CD8-positive, alpha-beta T cell (primary cell): ENCODE measurements at regions of chr6 and their contacts with region 1.

Region 1: DNA sequence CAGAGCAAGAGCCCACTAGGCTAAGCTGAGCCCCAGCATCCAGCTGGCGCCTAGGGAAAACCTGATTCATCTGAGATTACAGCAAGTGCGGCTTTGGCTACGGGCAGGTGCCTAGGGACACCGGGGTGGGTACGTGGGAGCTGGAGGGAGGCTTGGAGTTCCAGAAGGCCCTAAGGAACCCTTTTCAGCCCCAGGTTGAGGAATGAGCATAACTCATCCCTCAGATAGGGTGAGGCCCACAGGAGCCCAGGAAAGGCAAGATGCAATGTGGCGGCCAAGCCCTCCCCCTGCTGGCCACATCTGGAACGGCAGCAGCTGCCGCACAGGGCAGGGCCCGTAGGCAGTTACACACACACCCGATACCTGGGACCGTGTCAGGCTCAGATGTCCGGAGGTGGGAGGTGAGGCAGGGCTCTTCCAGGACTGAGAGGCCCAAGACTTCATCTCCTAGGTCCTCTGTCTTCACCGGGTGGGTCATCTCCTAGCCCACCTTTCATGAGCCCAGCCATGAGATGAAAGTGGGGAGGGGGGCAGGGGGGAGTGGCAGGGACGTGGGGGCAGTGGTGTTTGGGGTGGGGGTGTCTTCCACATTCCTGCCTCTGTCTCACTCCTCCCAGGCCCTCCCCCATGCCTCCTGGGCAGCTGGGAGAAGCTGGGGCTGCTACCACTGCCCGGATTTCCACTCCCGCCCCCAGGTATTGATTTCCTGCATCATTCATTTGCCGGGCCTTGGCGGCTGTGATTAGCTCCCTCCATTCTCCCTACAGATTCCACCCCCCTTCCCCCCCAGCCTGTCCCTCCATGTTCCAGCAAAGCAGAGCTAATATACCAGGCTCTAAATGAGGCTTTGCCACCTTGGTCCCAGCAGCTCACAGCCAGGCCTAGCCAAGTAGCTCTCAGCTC is 5.5 kb downstream of the MDGA1 start:
- DNase-seq: peak; percentile 64 to 90 (median 81)
- ATAC-seq: peak; percentile 83
- H3K4me3 ChIP-seq: no peak overlapping the region
- H3K4me3 Mint-ChIP-seq: no peak overlapping the region
- H3K27ac ChIP-seq: no peak overlapping the region
- H3K27ac Mint-ChIP-seq: no peak overlapping the region
- H3K4me1 ChIP-seq: peaks cover 16% of the 10 kb centered on the region
- H3K4me1 Mint-ChIP-seq: peaks cover 10% of the 10 kb centered on the region
- H3K27me3 ChIP-seq: peaks cover 6 to 25% of the 10 kb centered on the region in 2 experiments
- H3K27me3 Mint-ChIP-seq: peaks cover 21% of the 10 kb centered on the region
- CTCF ChIP-seq: peak; percentile 92

Region 2: DNA sequence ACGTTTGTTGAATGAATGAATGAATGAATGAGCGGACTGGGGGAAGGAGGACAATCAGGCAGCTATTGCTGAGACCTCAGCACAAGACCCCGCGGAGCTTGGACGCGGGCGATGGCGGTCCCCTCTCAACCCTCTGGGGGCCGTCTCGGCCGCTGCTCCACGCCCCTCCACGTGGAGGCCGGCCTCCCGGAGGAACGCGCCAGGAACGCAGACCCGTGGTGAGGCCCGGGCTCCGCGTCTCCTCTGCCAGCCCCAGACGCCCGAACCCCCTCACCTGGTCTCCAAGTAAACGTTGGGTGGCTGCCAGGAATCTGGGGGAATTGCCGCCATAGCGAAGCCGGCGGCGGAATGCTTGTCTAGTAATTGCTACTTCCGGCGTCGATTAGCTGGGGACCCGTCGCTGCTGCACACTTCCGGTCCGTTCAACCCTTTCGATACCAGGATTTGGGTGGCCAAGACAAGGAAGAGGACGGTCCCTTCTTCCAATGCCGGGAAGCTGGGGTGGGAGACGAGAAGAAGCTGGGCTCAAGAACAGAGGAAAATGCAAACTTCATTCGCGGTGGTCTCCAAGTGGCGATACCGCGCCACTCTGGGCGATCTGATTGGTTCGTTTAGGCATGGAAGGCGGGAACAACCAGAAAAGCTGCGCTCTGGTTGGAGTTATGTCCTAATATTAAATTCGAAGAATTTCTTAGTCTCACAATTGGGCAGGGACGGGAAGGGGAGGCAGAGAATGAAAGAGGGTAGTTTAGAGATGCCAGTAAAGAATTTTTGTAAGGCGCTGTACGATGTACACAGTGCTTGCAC is 817.5 kb before region 1 on chr6 and contains the start of gene PPIL1:
- CTCF ChIA-PET with region 1: no interaction called
- POLR2A ChIA-PET with region 1: no interaction called
- intact Hi-C with region 1: loop called in 1 of 2 experiments (anchors 10 kb)
- DNase-seq: peak; percentile 72 to 92 (median 85)
- ATAC-seq: peak; percentile 90
- H3K4me3 ChIP-seq: peak within 1 kb of the TSS; percentile 88 to 92
- H3K4me3 Mint-ChIP-seq: peak within 1 kb of the TSS; percentile 100
- H3K27ac ChIP-seq: peak within 1 kb of the TSS; percentile 82 to 87
- H3K27ac Mint-ChIP-seq: peak within 1 kb of the TSS; percentile 100
- H3K4me1 ChIP-seq: peaks cover 16% of the 10 kb centered on the region
- H3K4me1 Mint-ChIP-seq: peaks cover 48% of the 10 kb centered on the region
- H3K27me3 ChIP-seq: peaks cover 0 to 6% of the 10 kb centered on the region in 2 experiments
- H3K27me3 Mint-ChIP-seq: peaks cover 16% of the 10 kb centered on the region
- CTCF ChIP-seq: no peak
- total RNA-seq, gene PPIL1: 2.4 TPM

Region 3: GRCh38 chr6:37381579-37381978 is 310.6 kb before region 1 on chr6:
- CTCF ChIA-PET with region 1: interaction called, 9 read pairs
- POLR2A ChIA-PET with region 1: no interaction called
- intact Hi-C with region 1: loop called in 1 of 2 experiments (anchors 2 kb)
- DNase-seq: peak in 4 of 9 experiments; percentile 10 to 71 (median 42)
- ATAC-seq: peak; percentile 34
- H3K4me3 ChIP-seq: no peak overlapping the region
- H3K4me3 Mint-ChIP-seq: no peak overlapping the region
- H3K27ac ChIP-seq: no peak overlapping the region
- H3K27ac Mint-ChIP-seq: no peak overlapping the region
- H3K4me1 ChIP-seq: no peaks in the 10 kb centered on the region
- H3K4me1 Mint-ChIP-seq: no peaks in the 10 kb centered on the region
- H3K27me3 ChIP-seq: no peaks in the 10 kb centered on the region
- H3K27me3 Mint-ChIP-seq: no peaks in the 10 kb centered on the region
- CTCF ChIP-seq: peak; percentile 40

Region 4: DNA sequence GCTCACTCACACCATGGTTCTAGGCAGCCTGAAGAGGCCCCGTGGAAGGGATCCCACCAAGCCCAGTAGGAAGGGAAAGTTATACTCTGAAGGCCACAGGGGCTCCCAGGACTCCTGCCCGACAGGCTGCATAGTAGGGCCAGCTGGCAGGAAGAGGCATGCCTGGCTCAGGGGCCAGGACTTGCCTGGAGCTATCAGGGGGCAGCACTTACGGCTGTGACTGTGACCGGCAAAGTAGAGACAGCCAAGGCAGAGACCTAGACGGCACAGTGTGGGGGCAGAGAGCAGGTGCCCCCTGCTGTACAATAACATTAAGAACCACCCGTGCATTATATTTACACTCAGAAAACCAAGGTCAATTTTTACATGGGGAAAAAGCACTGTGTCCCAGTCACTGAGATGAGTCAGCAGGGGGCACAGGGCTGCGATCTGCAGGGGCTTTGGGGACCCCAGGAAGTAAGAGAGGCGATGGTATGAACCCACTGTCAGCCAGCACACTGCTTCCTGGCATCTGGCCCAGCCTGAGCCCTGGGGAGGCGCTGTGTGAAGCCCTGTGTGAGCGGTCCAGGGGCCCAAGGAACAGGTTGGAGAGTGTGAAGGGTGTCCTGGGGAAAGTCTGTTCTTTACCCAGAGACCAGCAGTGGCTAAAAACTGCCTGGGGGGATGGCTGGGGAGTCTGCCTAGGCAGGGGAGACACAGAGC is 202.3 kb before region 1 on chr6:
- CTCF ChIA-PET with region 1: interaction called, 13 read pairs
- POLR2A ChIA-PET with region 1: interaction called, 4 read pairs
- intact Hi-C with region 1: no loop called
- DNase-seq: peak in 7 of 9 experiments; percentile 41 to 75 (median 58)
- ATAC-seq: peak; percentile 78
- H3K4me3 ChIP-seq: no peak overlapping the region
- H3K4me3 Mint-ChIP-seq: peak overlapping the region; percentile 32
- H3K27ac ChIP-seq: peak overlapping the region in 1 of 2 experiments; percentile 72
- H3K27ac Mint-ChIP-seq: peak overlapping the region; percentile 91
- H3K4me1 ChIP-seq: peaks cover 37% of the 10 kb centered on the region
- H3K4me1 Mint-ChIP-seq: peaks cover 44% of the 10 kb centered on the region
- H3K27me3 ChIP-seq: no peaks in the 10 kb centered on the region
- H3K27me3 Mint-ChIP-seq: no peaks in the 10 kb centered on the region
- CTCF ChIP-seq: peak; percentile 55

Region 5: GRCh38 chr6:37705239-37706051 is 13.3 kb after region 1 on chr6:
- CTCF ChIA-PET with region 1: interaction called, 21 read pairs
- POLR2A ChIA-PET with region 1: no interaction called
- intact Hi-C with region 1: loop called in 1 of 2 experiments (anchors 1 kb)
- DNase-seq: peak; percentile 47 to 89 (median 80)
- ATAC-seq: peak; percentile 95
- H3K4me3 ChIP-seq: peak overlapping the region; percentile 56 to 66
- H3K4me3 Mint-ChIP-seq: peak overlapping the region; percentile 84
- H3K27ac ChIP-seq: peak overlapping the region in 1 of 2 experiments; percentile 36
- H3K27ac Mint-ChIP-seq: peak overlapping the region; percentile 62
- H3K4me1 ChIP-seq: peaks cover 6% of the 10 kb centered on the region
- H3K4me1 Mint-ChIP-seq: peaks cover 15% of the 10 kb centered on the region
- H3K27me3 ChIP-seq: no peaks in the 10 kb centered on the region
- H3K27me3 Mint-ChIP-seq: no peaks in the 10 kb centered on the region
- CTCF ChIP-seq: peak; percentile 62

Region 6: GRCh38 chr6:37762806-37763205 is 70.7 kb after region 1 on chr6:
- CTCF ChIA-PET with region 1: no interaction called
- POLR2A ChIA-PET with region 1: no interaction called
- intact Hi-C with region 1: no loop called
- DNase-seq: no peak
- ATAC-seq: no peak
- H3K4me3 ChIP-seq: no peak overlapping the region
- H3K4me3 Mint-ChIP-seq: no peak overlapping the region
- H3K27ac ChIP-seq: no peak overlapping the region
- H3K27ac Mint-ChIP-seq: no peak overlapping the region
- H3K4me1 ChIP-seq: no peaks in the 10 kb centered on the region
- H3K4me1 Mint-ChIP-seq: no peaks in the 10 kb centered on the region
- H3K27me3 ChIP-seq: no peaks in the 10 kb centered on the region
- H3K27me3 Mint-ChIP-seq: peaks cover 4% of the 10 kb centered on the region
- CTCF ChIP-seq: no peak

Region 7: DNA sequence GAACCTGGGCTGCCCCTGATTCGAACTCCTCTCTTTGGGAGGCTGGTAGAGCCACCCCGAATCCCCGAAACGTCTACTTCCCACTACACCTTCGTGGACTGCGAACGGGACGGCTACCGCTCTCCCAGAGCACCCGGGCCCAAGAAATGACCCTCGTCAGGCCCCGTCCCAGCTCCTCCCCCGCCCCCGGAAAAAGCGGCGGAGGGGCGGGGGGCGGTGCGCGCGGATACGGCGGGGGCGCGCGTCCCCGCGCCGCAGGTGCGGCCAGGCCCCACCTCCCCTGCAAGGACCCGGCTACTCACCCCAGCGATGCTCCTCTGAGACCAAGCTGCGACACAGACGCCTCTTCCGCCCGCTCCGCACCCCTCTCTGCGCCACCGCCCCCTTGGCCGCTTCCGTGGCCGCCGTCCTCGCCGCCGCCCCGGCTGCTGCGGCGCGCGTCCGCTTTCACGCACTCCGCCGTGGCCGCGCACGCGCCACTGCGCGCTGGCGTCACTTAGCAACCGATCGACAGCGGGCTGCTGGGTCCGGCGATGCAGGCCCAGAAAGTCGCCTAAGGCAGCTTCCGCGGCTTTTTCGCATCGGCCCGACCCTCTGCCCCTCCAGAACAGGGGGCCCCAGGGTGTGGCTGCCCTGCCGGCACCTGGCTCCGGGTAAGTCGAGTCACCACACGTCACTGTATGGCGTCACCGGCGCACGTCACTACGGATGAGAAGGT is 947.5 kb after region 1 on chr6 and contains the start of gene BTBD9:
- CTCF ChIA-PET with region 1: no interaction called
- POLR2A ChIA-PET with region 1: no interaction called
- intact Hi-C with region 1: loop called (anchors 5 to 10 kb)
- DNase-seq: peak; percentile 71 to 94 (median 80)
- ATAC-seq: peak; percentile 79
- H3K4me3 ChIP-seq: peak within 1 kb of the TSS; percentile 81 to 87
- H3K4me3 Mint-ChIP-seq: peak within 1 kb of the TSS; percentile 91
- H3K27ac ChIP-seq: peak within 1 kb of the TSS; percentile 92 to 99
- H3K27ac Mint-ChIP-seq: peak within 1 kb of the TSS; percentile 85
- H3K4me1 ChIP-seq: peaks cover 32% of the 10 kb centered on the region
- H3K4me1 Mint-ChIP-seq: peaks cover 52% of the 10 kb centered on the region
- H3K27me3 ChIP-seq: no peaks in the 10 kb centered on the region
- H3K27me3 Mint-ChIP-seq: no peaks in the 10 kb centered on the region
- CTCF ChIP-seq: no peak
- total RNA-seq, gene BTBD9: 54.2 to 54.5 TPM